ENCODE measurements at regions of chr1 and their contacts with region 1.

Region 1: GRCh38 chr1:2194898-2195673 is 514 bp upstream of the FAAP20 start:
- DNase-seq: peak; percentile 91
- H3K4me3 Mint-ChIP-seq: peak overlapping the region; percentile 80
- H3K27ac Mint-ChIP-seq: peak overlapping the region; percentile 94
- H3K4me1 Mint-ChIP-seq: peaks cover 38% of the 10 kb centered on the region
- H3K27me3 Mint-ChIP-seq: no peaks in the 10 kb centered on the region

Region 2: DNA sequence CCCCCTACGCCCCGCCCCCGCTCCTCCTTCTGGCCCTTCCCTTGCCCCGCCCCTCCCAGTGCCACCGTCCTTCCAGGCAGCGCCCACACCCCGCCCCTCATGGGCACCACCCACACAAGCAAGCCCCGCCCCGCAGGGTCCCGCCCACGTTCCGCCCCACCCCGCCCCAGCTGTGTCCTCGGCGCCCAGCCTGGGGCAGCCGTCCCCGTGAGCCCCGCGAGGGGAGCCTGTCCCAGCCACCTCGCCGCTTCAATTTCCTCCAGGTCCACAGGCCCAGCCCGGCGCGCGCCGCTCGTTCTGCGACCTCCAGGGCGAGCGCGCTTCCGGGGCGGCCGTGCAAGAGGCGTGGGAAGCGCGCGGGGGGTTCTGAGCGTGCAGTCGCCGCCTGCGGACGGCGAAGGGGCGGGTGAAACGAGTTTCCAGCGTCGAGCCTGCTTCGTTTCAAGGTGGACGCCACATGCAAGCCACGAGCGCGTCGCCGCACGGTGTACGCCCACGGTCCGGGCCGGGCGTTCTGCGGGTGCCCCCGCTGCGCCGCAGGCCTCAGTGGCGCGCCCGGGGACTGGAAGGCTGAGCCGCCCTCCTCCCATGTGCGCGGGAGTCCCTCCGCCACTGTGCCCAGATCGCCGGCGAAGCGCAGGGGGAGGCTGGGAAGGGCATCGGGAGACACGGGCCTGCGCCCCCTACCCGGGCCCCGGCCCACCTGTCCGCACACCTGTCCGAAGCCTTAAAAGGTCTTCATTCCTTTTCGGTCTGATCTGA is 10.3 kb after region 1 on chr1:
- CTCF ChIA-PET with region 1: interaction called, 15 read pairs
- POLR2A ChIA-PET with region 1: no interaction called
- intact Hi-C with region 1: loop called (anchors 1 kb)
- DNase-seq: peak; percentile 95
- H3K4me3 Mint-ChIP-seq: peak overlapping the region; percentile 59
- H3K27ac Mint-ChIP-seq: no peak overlapping the region
- H3K4me1 Mint-ChIP-seq: peaks cover 3% of the 10 kb centered on the region
- H3K27me3 Mint-ChIP-seq: no peaks in the 10 kb centered on the region

Region 3: GRCh38 chr1:2233997-2234761 is 39.1 kb after region 1 on chr1:
- CTCF ChIA-PET with region 1: interaction called, 45 read pairs
- POLR2A ChIA-PET with region 1: interaction called, 10 read pairs
- intact Hi-C with region 1: loop called (anchors 2 kb)
- DNase-seq: peak; percentile 83
- H3K4me3 Mint-ChIP-seq: peak overlapping the region; percentile 99
- H3K27ac Mint-ChIP-seq: peak overlapping the region; percentile 94
- H3K4me1 Mint-ChIP-seq: peaks cover 65% of the 10 kb centered on the region
- H3K27me3 Mint-ChIP-seq: no peaks in the 10 kb centered on the region

Region 4: GRCh38 chr1:2300851-2301606 is 105.9 kb after region 1 on chr1:
- CTCF ChIA-PET with region 1: interaction called, 9 read pairs
- POLR2A ChIA-PET with region 1: interaction called, 9 read pairs
- intact Hi-C with region 1: loop called (anchors 5 kb)
- DNase-seq: peak; percentile 95
- H3K4me3 Mint-ChIP-seq: peak overlapping the region; percentile 75
- H3K27ac Mint-ChIP-seq: peak overlapping the region; percentile 98
- H3K4me1 Mint-ChIP-seq: peaks cover 53% of the 10 kb centered on the region
- H3K27me3 Mint-ChIP-seq: no peaks in the 10 kb centered on the region

Region 5: DNA sequence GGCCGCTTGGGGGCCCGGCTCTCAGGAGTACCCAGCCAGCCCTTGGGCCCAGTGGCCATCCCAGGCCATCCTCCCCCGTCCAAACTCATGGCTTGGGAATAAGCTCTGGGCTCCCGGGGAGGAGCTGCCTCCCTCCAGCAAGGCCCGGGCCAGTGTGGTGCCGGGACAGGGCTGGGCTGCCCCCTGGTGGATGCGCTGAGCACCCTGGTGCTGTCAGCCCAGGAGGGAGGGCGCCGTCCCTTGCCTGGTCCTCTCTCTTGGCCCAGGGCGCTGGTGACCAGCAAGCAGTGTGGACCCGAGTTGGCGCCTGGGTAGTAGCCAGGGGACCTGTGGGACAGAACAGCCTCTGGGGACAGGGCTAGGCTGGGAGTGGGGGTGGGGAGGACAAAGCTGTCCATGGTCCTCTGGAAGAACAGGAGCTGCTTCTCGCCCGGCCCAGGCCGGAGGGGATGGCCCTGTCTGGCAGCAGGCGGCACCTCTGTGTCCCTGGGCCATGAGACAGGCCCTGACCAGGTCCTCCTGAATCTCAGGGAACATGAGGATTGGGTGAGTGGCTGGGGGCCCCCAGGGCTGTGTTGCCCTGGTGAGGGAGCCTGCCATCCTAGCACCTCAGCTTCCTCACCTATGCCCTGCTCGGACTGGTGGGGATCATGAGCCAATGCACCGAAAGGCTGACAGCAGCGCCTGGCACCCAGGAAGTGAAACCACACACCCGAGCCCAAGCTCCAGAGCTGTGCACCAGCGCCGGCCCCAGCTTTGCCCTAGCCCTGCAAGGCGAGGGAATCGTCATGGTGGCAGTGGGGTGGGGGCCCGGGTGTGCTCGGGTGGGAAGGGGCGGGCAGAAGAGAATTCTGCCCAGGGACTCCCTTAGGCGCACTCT is 186.9 kb after region 1 on chr1:
- CTCF ChIA-PET with region 1: interaction called, 409 read pairs
- POLR2A ChIA-PET with region 1: interaction called, 12 read pairs
- intact Hi-C with region 1: loop called (anchors 1 kb)
- DNase-seq: peak; percentile 85
- H3K4me3 Mint-ChIP-seq: no peak overlapping the region
- H3K27ac Mint-ChIP-seq: no peak overlapping the region
- H3K4me1 Mint-ChIP-seq: no peaks in the 10 kb centered on the region
- H3K27me3 Mint-ChIP-seq: no peaks in the 10 kb centered on the region

Region 6: DNA sequence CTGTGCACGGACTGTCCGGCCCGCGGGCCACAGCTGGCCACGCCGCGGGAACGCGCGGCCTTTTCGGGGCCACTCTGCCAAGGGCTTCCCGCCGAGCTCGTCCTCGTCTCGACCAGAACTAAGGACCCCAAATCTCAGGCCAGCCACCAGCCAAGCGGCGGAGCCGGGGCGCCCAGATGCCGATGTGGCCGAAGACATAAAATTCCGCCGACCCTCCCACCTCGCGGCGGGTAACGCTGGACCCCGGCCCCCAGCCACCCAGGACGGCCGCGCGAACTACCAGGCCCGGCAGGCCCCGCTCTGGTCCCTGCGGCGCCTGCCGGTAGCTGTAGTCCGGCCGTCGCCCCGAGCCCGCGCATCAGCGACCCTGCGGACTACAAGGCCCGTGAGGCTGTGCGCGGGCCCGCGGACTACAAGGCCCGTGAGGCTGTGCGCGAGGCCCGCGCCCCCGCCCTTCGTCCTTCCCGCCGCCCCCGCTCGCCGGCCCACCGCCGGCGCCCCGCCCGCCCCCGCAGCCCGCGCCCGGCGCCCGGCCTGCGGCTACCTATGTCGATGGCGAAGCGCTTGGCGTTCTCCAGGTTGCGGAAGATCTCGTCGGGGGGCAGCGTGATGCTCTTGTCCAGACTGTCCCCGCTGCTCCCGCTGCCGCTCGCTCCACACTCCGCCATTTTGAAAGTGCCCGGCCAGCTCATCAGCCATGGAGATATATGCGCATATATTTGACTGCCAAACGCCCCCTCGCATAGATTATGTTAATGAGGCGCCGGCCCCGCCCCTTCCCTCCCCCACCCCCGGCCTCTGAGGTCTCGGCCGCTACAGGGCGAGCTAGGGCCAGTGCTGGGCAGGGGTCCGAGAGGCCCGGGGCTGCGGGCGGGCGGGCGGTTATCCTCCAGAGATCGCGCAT is 331.1 kb after region 1 on chr1 and contains the start of gene PANK4:
- CTCF ChIA-PET with region 1: interaction called, 6 read pairs
- POLR2A ChIA-PET with region 1: no interaction called
- intact Hi-C with region 1: loop called (anchors 1 kb)
- DNase-seq: peak; percentile 92
- H3K4me3 Mint-ChIP-seq: peak within 1 kb of the TSS; percentile 85
- H3K27ac Mint-ChIP-seq: peak within 1 kb of the TSS; percentile 92
- H3K4me1 Mint-ChIP-seq: peaks cover 45% of the 10 kb centered on the region
- H3K27me3 Mint-ChIP-seq: peaks cover 5% of the 10 kb centered on the region
- total RNA-seq, gene PANK4: 42.6 to 45.1 TPM